Activated CD4-positive, alpha-beta T cell treated with anti-CD3 and anti-CD28 coated beads, Interleukin-2, amount 10 ng/mL, durations not matched to agents 7 days and 5 days (primary cell): ENCODE measurements at regions of chr10 and their contacts with region 1.

Region 1: GRCh38 chr10:104120512-104121241 is 1.3 kb upstream of the SFR1 start:
- DNase-seq: peak; percentile 82
- H3K4me3 Mint-ChIP-seq: peak overlapping the region; percentile 94
- H3K27ac Mint-ChIP-seq: peak overlapping the region; percentile 100
- H3K4me1 Mint-ChIP-seq: peaks cover 40% of the 10 kb centered on the region
- H3K27me3 Mint-ChIP-seq: peaks cover 9% of the 10 kb centered on the region

Region 2: DNA sequence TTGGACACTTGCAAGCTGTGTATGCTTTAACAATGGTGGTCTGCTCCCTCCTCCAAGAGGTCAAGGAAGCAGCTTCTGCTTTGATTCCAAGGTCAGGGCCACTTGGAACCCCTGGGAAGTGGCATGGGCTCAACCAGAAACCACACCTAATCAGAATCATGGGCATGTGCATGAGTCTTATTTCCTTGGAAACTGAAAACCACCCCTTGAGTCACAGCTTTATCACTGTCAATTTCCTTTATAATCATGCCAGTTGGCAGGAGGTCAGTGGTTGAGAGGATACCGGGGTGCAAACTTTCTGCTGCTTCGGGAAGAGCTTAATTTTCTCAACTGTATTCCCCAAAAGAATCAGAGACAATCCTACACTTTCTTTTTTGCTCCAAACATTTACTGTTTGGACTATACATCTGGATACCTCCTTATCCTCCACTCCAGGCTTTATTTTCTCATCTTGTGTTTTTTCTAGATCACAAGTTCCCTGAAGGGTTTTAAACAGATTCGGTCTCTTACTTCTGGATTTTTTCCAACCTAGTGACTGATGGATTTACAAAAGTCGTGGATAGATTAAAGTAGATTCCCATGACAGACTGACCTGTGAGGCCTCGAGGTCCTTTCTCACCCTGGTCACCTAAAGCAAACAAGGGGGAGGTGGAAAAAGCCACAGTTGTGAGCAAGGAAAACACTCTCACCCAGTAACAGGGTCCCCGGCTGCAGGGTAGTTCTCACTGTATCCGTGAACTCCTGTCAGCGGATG is 71.0 kb before region 1 on chr10:
- CTCF ChIA-PET with region 1: no interaction called
- POLR2A ChIA-PET with region 1: interaction called, 14 read pairs
- DNase-seq: no peak
- H3K4me3 Mint-ChIP-seq: no peak overlapping the region
- H3K27ac Mint-ChIP-seq: no peak overlapping the region
- H3K4me1 Mint-ChIP-seq: peaks cover 3% of the 10 kb centered on the region
- H3K27me3 Mint-ChIP-seq: no peaks in the 10 kb centered on the region

Region 3: DNA sequence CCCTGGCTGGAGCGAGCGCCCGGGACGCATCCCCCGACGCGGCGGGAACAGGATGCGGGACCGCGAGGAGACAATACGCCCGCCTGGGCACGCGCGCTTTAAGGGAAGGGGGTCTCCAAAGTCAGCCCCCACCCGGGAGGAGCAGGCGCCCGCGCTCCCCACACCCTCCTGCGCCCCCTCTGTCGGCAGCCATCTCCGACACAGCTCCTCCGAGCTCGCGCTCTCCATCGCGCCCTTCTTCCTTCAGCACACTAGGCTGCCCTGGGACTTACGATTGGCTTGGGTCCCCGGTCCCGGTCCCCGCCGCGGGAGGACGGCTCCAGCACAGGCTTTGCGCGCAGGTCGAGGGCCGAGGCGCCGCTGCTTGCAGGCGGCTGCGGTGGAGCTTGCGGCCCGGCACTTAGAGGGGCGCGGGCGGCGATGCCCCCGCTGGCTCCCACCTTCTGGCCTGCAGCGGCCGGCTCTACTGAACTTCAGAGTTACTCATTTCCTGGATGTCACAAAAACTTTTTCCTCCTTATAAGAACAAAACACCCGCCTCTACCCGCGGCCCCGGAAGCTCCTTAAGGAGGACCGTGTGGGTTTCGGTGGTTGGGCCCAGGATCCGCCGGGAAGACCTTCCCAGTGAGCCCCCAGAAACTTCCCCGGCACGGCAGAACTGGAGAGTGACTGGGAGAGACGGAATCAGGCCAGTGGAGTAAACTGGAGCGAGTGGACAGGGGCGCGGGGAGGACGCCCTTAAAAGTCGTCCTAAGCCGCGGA is 217.5 kb after region 1 on chr10 and contains the start of gene ITPRIP:
- CTCF ChIA-PET with region 1: no interaction called
- POLR2A ChIA-PET with region 1: no interaction called
- DNase-seq: peak; percentile 75
- H3K4me3 Mint-ChIP-seq: peak within 1 kb of the TSS; percentile 98
- H3K27ac Mint-ChIP-seq: peak within 1 kb of the TSS; percentile 100
- H3K4me1 Mint-ChIP-seq: peaks cover 55% of the 10 kb centered on the region
- H3K27me3 Mint-ChIP-seq: peaks cover 5% of the 10 kb centered on the region
- total RNA-seq, gene ITPRIP: 24.9 to 26.5 TPM